RWPE1 (cell line): ENCODE measurements at regions of chr5 and their contacts with region 1.

Region 1: DNA sequence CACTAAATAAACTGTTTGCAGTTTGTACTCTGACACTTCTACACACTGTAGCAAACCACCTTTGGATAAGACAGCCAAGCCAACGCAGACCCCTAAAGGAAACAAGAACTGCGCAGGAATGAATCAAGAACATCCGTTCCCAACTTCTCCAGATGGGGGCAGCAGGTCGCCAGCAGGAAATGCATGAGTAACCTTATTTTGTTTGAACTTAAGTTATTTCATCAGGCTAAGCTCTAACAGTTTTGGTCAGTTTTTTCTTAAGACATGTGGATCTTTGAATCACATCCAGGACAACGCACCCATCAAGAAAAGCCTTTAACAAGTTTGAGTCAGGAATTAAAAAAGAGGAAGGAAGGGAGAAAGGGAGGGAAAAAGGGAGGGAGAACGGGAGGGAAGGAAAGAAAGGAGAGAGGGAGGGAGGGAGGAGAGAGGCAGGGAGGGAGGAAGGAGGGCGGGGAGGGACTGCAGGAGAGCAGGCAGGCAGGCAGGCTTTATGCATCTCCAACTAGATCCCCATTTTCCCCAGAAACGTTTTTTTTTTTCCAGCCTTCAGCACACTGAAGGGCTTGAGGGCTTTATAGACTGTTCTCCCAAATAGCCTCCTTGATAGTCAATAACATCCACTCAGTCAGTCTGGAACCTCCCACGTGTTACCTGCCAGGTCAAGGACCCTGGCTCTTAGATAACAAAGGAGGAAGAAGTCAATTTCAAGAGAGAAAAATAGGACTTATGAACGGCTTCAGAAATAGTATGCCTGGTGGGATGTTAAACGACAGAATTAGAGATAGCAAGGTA is 22.2 kb downstream of the BHMT start:
- DNase-seq: peak; percentile 72
- H3K27ac ChIP-seq: no peak overlapping the region
- CTCF ChIP-seq: peak; percentile 91

Region 2: DNA sequence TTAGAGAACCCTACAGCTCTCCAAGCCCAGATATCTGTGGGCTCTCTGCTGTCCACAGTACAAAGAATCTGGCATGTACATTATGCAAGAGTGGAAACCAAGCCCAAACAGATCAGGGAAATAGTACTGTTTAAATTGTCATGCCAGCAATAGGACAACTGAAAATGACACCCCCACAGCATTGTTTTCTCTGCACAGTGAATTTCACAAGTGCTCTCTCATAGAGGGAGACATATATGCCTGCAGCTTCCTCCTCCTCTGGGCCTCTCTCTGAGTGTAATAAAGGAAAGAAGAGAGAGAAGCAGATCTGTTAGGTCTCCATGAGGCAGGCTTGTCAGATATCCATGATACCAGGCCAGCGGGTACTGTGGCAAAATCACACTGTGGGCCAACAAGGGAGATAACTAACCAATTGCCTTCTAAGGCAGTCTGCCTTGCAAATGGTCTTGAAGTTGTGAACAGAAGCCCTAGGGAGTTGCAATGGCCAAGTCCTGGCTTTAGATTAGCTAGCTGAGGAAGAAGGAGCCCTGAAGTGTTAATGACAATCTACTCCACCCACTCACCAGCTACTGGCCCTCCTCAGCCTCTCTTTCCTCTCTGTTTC is 47.7 kb after region 1 on chr5:
- CTCF ChIA-PET with region 1: interaction called, 11 read pairs
- POLR2A ChIA-PET with region 1: no interaction called
- DNase-seq: no peak
- H3K27ac ChIP-seq: no peak overlapping the region
- CTCF ChIP-seq: no peak

Region 3: GRCh38 chr5:79235634-79236363 is 101.9 kb after region 1 on chr5 and contains the start of gene JMY:
- CTCF ChIA-PET with region 1: interaction called, 24 read pairs
- POLR2A ChIA-PET with region 1: no interaction called
- DNase-seq: peak; percentile 89
- H3K27ac ChIP-seq: peak within 1 kb of the TSS; percentile 88
- CTCF ChIP-seq: peak; percentile 32